ENCODE measurements at regions of chr1 and their contacts with region 1.

Region 1: GRCh38 chr1:172443626-172444453 is at the start of gene PIGC:
- DNase-seq: peak; percentile 83
- H3K4me3 ChIP-seq: peak within 1 kb of the TSS; percentile 68 to 92 (median 83)
- H3K27ac ChIP-seq: peak within 1 kb of the TSS; percentile 76
- H3K4me1 ChIP-seq: peaks cover 16% of the 10 kb centered on the region
- H3K27me3 ChIP-seq: no peaks in the 10 kb centered on the region
- CTCF ChIP-seq: peak; percentile 90 to 93
- POLR2A ChIP-seq: peak; percentile 63
- total RNA-seq, gene PIGC: 15.9 and 16.1 TPM in 2 replicates

Region 2: DNA sequence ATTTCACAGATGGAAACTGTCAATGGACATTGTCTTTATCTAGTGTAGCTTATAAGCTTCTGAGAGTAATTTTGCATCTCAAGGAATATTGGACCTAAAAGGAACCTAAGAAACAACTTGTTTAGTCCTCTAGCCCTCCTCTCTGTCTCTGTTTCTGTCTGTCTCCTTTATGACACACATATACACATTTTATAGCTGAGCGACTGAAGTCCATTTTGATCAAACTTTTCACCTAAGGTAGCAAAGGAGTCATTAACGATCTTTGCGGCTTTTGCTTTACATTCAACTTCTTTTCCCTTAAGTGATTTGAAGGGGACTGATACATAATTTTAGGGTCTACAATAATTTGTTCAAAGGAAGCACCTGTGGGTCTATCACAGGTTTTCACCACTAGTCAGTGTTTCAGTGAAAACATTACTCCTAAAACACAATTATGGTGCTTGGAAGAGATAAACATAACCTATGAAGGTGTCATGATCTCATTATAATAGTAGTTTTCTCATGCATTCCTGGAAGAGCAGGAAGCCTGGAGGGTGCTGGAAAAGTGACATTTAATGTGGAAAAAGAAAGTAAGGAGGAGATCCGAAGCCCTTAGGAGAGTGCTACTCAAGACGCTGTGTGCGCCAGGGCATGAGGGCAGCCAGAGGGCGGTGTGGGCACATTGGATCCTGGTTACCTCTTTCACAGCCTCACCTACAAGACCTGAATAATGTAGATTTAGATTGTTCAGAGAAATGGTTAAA is 353.9 kb before region 1 on chr1:
- CTCF ChIA-PET with region 1: no interaction called
- POLR2A ChIA-PET with region 1: no interaction called
- dilution Hi-C with region 1: no loop called
- intact Hi-C with region 1: loop called (anchors 1 kb)
- DNase-seq: peak; percentile 67
- H3K4me3 ChIP-seq: no peak overlapping the region
- H3K27ac ChIP-seq: no peak overlapping the region
- H3K4me1 ChIP-seq: no peaks in the 10 kb centered on the region
- H3K27me3 ChIP-seq: no peaks in the 10 kb centered on the region
- CTCF ChIP-seq: peak; percentile 59 to 67
- POLR2A ChIP-seq: no peak

Region 3: DNA sequence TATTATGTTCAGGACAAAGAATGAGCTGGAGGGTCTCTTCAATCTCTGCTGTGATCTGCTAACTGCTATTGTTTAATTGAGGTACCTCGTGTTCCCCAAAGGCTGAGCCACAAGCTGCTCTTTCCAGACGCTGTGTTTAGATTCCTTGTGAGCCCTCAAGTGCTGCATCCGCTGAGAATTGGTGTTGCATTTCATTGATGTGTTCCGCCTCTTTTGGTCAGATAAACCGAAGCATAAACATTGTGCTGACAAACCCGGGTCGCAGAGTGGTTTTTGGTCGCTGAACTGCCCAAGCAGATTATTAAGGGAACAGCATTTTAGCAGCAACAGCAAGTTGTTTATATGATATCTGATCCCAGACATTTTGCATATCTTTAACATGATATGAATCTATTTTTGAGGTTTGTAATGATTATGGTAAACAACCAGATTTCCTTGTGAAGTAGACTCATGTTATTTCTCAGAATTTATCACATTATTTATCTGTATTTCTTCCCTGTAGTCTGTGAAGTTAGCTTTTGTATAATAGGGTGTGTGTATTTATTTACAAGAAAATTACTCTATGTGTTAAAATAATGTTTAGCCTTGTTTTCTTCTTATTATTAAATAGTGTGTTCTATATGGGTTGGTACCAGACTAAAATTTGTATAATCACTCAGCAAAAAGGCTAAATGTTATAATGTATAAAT is 240.6 kb before region 1 on chr1:
- CTCF ChIA-PET with region 1: no interaction called
- POLR2A ChIA-PET with region 1: no interaction called
- dilution Hi-C with region 1: no loop called
- intact Hi-C with region 1: no loop called
- DNase-seq: no peak
- H3K4me3 ChIP-seq: no peak overlapping the region
- H3K27ac ChIP-seq: no peak overlapping the region
- H3K4me1 ChIP-seq: no peaks in the 10 kb centered on the region
- H3K27me3 ChIP-seq: no peaks in the 10 kb centered on the region
- CTCF ChIP-seq: no peak
- POLR2A ChIP-seq: no peak